MCF 10A (cell line): ENCODE measurements at regions of chr5 and their contacts with region 1.

Region 1: GRCh38 chr5:36079200-36079761 is 12.6 kb upstream of the UGT3A2 start:
- DNase-seq: peak; percentile 65
- H3K4me3 Mint-ChIP-seq: no peak overlapping the region
- H3K27ac Mint-ChIP-seq: no peak overlapping the region
- H3K4me1 Mint-ChIP-seq: no peaks in the 10 kb centered on the region
- H3K27me3 Mint-ChIP-seq: peaks cover 29% of the 10 kb centered on the region
- CTCF ChIP-seq: peak; percentile 56

Region 2: GRCh38 chr5:35971186-35971877 is 107.9 kb before region 1 on chr5:
- CTCF ChIA-PET with region 1: no interaction called
- POLR2A ChIA-PET with region 1: no interaction called
- intact Hi-C with region 1: no loop called
- DNase-seq: no peak
- H3K4me3 Mint-ChIP-seq: no peak overlapping the region
- H3K27ac Mint-ChIP-seq: no peak overlapping the region
- H3K4me1 Mint-ChIP-seq: no peaks in the 10 kb centered on the region
- H3K27me3 Mint-ChIP-seq: peaks cover 20% of the 10 kb centered on the region
- CTCF ChIP-seq: no peak

Region 3: DNA sequence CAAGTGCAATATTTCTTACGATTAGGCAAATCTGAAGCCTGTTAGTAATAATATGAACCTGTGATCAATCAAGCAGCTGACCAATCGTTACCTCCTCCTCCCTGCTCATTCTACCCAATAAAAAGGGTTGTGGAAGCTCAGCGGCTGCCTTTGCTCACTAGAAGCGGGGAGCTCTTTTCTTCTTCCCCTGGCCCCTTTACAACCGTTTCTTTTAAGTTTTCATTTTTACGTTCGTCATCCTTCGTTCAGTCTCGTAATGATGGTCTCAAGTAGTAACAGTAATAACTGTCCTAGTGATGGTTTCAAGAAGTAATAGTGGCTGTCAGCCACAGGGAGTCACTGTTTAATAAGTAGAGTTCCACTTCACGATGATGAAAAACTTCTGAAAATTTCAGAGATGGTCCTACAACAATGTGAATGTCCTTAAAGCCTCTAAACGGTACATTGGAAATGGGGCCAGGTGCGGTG is 18.8 kb before region 1 on chr5:
- CTCF ChIA-PET with region 1: interaction called, 11 read pairs
- POLR2A ChIA-PET with region 1: no interaction called
- intact Hi-C with region 1: no loop called
- DNase-seq: no peak
- H3K4me3 Mint-ChIP-seq: no peak overlapping the region
- H3K27ac Mint-ChIP-seq: peak overlapping the region; percentile 49
- H3K4me1 Mint-ChIP-seq: peaks cover 5% of the 10 kb centered on the region
- H3K27me3 Mint-ChIP-seq: peaks cover 22% of the 10 kb centered on the region
- CTCF ChIP-seq: peak; percentile 13

Region 4: GRCh38 chr5:36089989-36090564 is 10.8 kb after region 1 on chr5:
- CTCF ChIA-PET with region 1: interaction called, 34 read pairs
- POLR2A ChIA-PET with region 1: interaction called, 3 read pairs
- intact Hi-C with region 1: no loop called
- DNase-seq: peak; percentile 25
- H3K4me3 Mint-ChIP-seq: no peak overlapping the region
- H3K27ac Mint-ChIP-seq: no peak overlapping the region
- H3K4me1 Mint-ChIP-seq: no peaks in the 10 kb centered on the region
- H3K27me3 Mint-ChIP-seq: peaks cover 11% of the 10 kb centered on the region
- CTCF ChIP-seq: no peak

Region 5: GRCh38 chr5:36151434-36152323 is 72.4 kb after region 1 on chr5 and contains the starts of genes LMBRD2 and SKP2:
- CTCF ChIA-PET with region 1: interaction called, 6 read pairs
- POLR2A ChIA-PET with region 1: interaction called, 6 read pairs
- intact Hi-C with region 1: loop called (anchors 10 kb)
- DNase-seq: peak; percentile 98
- H3K4me3 Mint-ChIP-seq: peak within 1 kb of the TSS; percentile 92
- H3K27ac Mint-ChIP-seq: peak within 1 kb of the TSS; percentile 91
- H3K4me1 Mint-ChIP-seq: peaks cover 39% of the 10 kb centered on the region
- H3K27me3 Mint-ChIP-seq: no peaks in the 10 kb centered on the region
- CTCF ChIP-seq: no peak
- total RNA-seq, gene LMBRD2: 7.9 and 9.6 TPM in 2 replicates
- total RNA-seq, gene SKP2: 19.3 and 21.7 TPM in 2 replicates

Region 6: GRCh38 chr5:36305571-36306326 is 226.5 kb after region 1 on chr5:
- CTCF ChIA-PET with region 1: interaction called, 9 read pairs
- POLR2A ChIA-PET with region 1: no interaction called
- intact Hi-C with region 1: loop called (anchors 1 kb)
- DNase-seq: peak; percentile 65
- H3K4me3 Mint-ChIP-seq: no peak overlapping the region
- H3K27ac Mint-ChIP-seq: peak overlapping the region; percentile 47
- H3K4me1 Mint-ChIP-seq: peaks cover 11% of the 10 kb centered on the region
- H3K27me3 Mint-ChIP-seq: peaks cover 27% of the 10 kb centered on the region
- CTCF ChIP-seq: peak; percentile 49

Region 7: GRCh38 chr5:36397901-36398536 is 318.7 kb after region 1 on chr5:
- CTCF ChIA-PET with region 1: interaction called, 5 read pairs
- POLR2A ChIA-PET with region 1: no interaction called
- intact Hi-C with region 1: loop called (anchors 1 kb)
- DNase-seq: peak; percentile 47
- H3K4me3 Mint-ChIP-seq: no peak overlapping the region
- H3K27ac Mint-ChIP-seq: no peak overlapping the region
- H3K4me1 Mint-ChIP-seq: peaks cover 5% of the 10 kb centered on the region
- H3K27me3 Mint-ChIP-seq: no peaks in the 10 kb centered on the region
- CTCF ChIP-seq: peak; percentile 47